ENCODE measurements at regions of chr7 and their contacts with region 1.

Region 1: DNA sequence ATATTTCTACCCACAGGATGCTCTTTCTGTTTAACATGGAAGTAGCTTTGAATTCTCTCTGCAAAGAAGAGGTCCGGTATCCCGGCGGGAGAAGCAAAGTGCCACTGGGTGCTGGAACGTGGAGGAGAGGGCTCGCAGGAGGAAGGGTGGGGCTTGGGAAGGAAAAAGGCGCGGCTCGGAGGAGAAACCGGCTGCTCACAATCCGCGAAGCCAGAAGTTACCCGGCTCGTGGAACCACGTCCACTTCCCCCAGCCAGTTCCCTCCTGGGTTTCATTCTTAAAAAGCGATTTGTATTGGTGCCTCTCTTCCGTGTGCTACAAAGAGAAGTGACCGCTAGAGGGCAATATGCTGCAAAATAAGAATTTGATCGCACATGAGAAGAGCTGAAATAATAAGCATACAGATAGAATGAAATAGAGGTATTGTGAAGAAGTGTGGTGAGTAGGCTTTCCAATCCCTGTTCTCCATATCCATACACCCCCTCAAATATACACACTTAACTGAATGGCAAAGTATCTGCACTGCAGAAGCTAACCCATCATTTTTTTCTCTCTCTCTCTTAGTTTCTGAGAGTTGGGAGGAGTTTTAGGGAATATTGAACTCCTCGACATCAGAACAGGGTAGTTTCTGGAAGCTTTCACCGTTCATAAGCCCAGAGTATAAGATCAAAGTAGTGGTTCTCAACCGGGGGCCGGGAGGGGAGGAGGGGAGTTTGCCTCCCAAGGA is 31.1 kb downstream of the TRIL start:
- DNase-seq: peak; percentile 61
- H3K4me3 Mint-ChIP-seq: peak overlapping the region; percentile 72
- H3K27ac Mint-ChIP-seq: no peak overlapping the region
- H3K4me1 Mint-ChIP-seq: peaks cover 15% of the 10 kb centered on the region
- H3K27me3 Mint-ChIP-seq: peaks cover 28% of the 10 kb centered on the region

Region 2: DNA sequence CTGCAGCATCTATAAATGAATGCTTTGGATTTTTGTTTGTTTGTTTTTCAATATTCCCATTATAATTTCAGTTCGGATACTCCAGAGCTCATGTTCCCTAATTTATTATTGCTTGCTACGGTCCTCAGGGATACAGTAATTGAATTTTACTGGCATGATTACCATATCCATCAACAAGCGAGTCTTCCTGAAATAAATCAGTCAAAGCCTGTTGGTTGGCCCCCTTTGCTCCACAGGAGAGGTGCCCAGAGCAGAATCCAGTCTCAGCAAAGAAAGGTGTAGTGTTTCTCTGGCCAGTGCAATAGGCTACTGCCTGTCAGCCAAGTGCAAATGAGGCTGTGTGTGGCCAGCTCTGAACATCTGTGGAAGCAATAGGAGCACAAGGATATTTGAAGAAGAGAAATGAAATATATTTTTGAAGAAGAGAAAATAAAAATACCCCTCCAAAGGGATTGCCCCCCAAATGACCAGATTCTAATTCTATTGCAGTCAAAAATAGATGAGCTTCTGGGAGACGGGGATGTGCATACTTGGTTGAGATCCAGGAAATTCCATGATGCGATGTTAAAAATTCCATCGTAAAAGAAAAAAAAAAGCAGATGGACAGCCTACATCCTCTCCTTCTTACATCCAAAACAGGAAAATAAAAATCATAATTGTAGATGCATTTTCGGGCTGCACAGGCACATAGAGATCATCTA is 13.0 kb after region 1 on chr7:
- CTCF ChIA-PET with region 1: interaction called, 21 read pairs
- POLR2A ChIA-PET with region 1: no interaction called
- DNase-seq: no peak
- H3K4me3 Mint-ChIP-seq: no peak overlapping the region
- H3K27ac Mint-ChIP-seq: no peak overlapping the region
- H3K4me1 Mint-ChIP-seq: no peaks in the 10 kb centered on the region
- H3K27me3 Mint-ChIP-seq: peaks cover 18% of the 10 kb centered on the region

Region 3: DNA sequence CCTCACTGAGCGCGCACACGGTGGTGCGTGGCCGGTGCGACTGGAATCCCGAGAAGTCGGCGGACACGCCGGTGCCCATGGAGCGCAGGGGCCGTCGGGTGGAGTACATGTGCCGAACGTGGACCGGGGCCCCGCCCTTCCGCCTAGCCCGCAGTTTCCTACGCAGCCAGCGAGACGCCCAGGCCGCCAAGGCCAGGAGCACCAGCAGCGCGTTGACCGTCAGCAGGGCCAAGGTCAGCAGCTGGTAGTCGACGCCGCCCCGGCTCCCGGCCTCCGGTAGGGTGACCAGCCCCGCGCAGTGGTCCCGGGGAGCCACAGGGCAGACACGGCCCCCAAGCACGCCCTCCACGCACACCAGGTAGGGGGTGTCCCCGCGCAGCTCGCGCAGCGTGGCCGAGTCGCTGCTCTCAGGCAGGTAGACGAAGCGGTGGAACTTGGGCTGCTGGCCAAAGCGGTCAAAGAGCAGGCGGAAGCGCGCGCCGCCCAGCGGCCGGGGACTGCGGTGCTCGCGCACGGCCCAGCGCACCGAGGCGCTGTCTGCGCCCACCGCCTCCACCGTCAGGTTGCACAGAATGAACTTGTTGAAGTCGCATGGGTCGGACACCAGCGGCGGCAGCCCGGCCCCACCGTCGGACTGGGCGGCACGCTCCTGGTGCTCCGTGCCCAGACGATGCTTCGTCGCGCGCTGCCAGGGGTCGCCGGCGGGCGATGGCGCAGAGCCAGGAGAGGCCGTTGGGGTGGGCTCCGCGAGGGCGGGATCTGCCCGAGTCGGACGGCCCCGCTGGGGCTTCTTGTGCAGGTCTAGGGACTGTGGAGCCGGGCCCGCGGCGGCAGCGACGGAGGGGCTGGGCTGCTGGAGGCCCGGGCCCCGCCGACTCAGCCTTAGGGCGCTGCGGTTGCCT is 28.9 kb after region 1 on chr7:
- CTCF ChIA-PET with region 1: interaction called, 11 read pairs
- POLR2A ChIA-PET with region 1: no interaction called
- DNase-seq: peak; percentile 33
- H3K4me3 Mint-ChIP-seq: peak overlapping the region; percentile 2
- H3K27ac Mint-ChIP-seq: no peak overlapping the region
- H3K4me1 Mint-ChIP-seq: peaks cover 8% of the 10 kb centered on the region
- H3K27me3 Mint-ChIP-seq: peaks cover 66% of the 10 kb centered on the region

Region 4: DNA sequence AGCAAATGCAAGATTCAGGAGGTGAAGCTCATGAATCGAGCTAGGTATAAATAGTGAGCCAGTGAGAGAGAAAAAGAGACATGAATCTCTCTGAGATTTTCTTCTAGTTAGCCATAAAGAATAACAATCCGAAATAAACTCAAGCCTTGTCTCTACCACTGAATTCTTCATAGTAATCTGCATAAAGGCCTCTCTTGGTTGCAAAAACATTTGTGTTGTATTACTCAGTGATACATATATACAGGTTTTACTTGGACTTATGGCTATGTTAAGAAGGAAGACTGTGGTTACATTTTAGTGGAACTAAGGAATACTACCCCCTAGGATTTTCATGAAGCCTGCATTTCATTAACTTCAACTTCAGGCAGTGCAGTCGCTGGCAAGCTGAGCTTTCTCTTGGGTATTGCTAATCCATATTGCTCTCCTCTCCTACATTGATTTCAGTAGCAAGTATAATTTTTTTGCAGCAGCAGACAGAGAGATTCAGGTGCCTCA is 103.8 kb after region 1 on chr7:
- CTCF ChIA-PET with region 1: no interaction called
- POLR2A ChIA-PET with region 1: no interaction called
- DNase-seq: no peak
- H3K4me3 Mint-ChIP-seq: no peak overlapping the region
- H3K27ac Mint-ChIP-seq: no peak overlapping the region
- H3K4me1 Mint-ChIP-seq: peaks cover 10% of the 10 kb centered on the region
- H3K27me3 Mint-ChIP-seq: peaks cover 9% of the 10 kb centered on the region

Region 5: DNA sequence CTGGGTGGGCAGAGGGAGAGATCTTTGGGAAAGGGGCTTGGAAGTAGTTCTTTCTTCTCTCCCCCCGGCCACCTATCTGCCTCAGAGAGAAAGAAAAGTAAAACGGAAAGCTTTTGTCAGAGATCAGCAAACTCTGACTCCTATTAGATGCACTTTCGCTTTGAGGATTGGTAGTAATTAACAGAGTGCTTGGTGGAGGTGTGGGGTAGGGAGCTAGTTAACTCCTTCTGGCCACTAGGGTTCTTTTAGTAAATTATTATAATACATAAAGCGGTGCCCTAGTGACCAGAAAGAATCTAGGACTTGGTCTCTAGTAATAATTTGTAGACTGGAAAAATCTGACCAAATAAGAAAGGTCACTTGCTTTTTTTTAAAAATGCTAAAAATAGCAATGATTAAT is 164.7 kb after region 1 on chr7:
- CTCF ChIA-PET with region 1: interaction called, 11 read pairs
- POLR2A ChIA-PET with region 1: no interaction called
- DNase-seq: peak; percentile 26
- H3K4me3 Mint-ChIP-seq: peak overlapping the region; percentile 74
- H3K27ac Mint-ChIP-seq: peak overlapping the region; percentile 84
- H3K4me1 Mint-ChIP-seq: peaks cover 18% of the 10 kb centered on the region
- H3K27me3 Mint-ChIP-seq: no peaks in the 10 kb centered on the region

Region 6: GRCh38 chr7:29105752-29106668 is 179.0 kb after region 1 on chr7:
- CTCF ChIA-PET with region 1: interaction called, 88 read pairs
- POLR2A ChIA-PET with region 1: interaction called, 3 read pairs
- DNase-seq: peak; percentile 24
- H3K4me3 Mint-ChIP-seq: no peak overlapping the region
- H3K27ac Mint-ChIP-seq: no peak overlapping the region
- H3K4me1 Mint-ChIP-seq: peaks cover 4% of the 10 kb centered on the region
- H3K27me3 Mint-ChIP-seq: peaks cover 22% of the 10 kb centered on the region

Region 7: DNA sequence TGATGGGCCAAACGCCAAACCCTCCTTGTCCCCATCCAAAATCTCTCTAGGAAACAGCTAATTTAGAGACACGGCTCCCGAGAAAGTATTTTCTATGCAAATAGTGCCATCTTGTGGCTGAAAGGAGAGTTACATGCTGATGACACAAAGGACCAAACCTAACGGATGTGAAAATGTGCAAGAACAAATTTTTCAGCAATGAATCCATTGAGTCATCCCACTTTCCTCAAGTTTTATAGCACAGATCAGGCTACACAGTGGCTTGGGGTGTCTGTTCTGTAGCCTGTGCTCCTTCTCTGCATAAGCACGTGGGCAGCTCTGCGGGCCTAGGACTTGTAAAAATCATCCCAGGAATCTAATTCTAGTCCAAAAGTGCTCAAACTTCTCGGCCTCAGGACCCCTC is 481.8 kb after region 1 on chr7:
- CTCF ChIA-PET with region 1: interaction called, 29 read pairs
- POLR2A ChIA-PET with region 1: no interaction called
- DNase-seq: peak; percentile 44
- H3K4me3 Mint-ChIP-seq: no peak overlapping the region
- H3K27ac Mint-ChIP-seq: no peak overlapping the region
- H3K4me1 Mint-ChIP-seq: no peaks in the 10 kb centered on the region
- H3K27me3 Mint-ChIP-seq: no peaks in the 10 kb centered on the region

Measured in activated CD4-positive, alpha-beta memory T cell treated with anti-CD3 and anti-CD28 coated beads, Interleukin-2, amount 10 ng/mL, durations not matched to agents 7 days and 5 days (primary cell).